Sciatic nerve (tissue), 2 donors: ENCODE measurements at regions of chr11 and their contacts with region 1.

Region 1: DNA sequence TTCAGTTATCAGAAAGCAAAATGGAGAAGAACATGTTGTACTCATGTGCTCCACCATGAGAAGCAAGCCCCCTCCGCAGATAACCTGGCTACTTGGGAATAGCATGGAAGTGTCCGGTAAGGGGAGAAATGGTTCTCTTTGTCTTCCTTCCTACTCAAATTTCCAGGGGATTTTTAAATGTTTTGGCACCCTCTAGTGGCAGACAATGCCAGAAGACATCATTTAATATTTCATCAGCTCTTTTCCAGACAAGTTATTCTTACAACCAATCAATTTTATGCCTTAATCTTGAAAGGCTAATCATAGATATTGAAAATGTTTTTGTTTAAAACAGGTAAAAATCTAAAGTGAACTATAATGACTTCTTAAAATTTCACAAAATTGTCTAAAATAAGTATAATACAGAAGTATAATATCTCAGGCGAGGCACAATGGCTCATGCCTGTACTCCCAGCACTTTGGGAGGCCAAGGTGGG is 15.7 kb downstream of the CRTAM start:
- DNase-seq: no peak
- ATAC-seq: peak; percentile 67

Region 2: DNA sequence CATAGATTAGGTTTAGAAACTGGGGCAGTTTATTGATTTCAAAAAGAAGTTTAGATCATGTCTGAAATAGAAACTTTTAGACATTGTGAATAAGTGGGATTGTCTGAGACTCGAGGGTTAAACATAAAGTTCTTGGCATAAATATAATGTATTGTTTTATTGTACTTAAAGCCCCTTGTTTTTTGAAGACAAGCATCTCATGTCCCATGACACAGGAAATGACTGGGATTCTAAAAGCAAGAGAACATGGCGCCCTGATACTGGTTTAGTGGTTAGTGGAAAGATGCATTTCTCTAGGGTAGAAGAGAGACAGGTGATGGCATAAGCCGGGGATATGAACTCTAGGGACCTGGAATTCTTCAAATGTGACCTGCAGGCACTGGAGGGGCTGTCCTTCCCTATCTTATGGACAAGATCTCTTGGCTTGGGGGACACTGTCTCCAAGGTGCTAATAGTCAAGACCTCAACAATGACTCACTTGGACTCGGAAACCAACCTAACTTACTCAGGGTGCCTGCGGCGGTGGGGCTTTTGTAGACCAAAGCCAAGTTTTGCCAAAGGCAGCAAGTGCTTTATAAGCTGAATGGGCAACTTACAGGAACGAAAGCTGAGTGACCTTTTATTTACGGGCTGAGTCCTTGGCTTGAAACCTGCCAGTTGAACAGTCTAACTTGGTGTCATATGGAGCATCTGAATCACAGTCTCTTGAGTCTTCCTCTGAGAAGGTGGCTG is 150.3 kb before region 1 on chr11:
- intact Hi-C with region 1: loop called (anchors 5 kb)
- DNase-seq: no peak
- ATAC-seq: no peak

Region 3: GRCh38 chr11:122796128-122796717 is 57.8 kb before region 1 on chr11:
- intact Hi-C with region 1: loop called (anchors 10 kb)
- DNase-seq: no peak
- ATAC-seq: peak; percentile 66